ENCODE measurements at regions of chr7 and their contacts with region 1.

Region 1: DNA sequence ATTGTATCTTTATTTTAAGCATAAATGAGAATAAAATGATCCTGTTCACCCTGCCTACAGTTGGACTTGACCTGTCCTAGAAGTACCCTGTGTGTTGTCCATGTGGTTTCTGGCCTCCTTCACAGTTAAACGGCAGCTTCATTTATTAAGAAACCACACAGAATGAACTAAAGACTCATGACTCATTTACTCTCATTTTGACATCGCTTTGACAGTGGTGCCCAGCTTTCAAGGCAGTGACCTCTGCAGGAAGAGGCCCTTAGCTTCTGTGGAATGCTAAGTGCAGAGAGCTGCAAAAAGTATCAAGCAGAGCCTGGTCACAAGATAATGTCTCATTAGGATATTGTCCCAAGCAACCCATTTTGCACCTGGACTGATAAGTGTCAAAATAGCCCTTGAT is 93.4 kb downstream of the AVL9 start:
- DNase-seq: no peak
- ATAC-seq: peak in 3 of 4 donors; percentile 45 to 52 (median 50)
- H3K4me3 ChIP-seq: no peak overlapping the region
- H3K27ac ChIP-seq: peak overlapping the region in 11 of 12 donors; percentile 65 to 87 (median 79)
- H3K4me1 ChIP-seq: peaks cover 12 to 43% (median 34%) of the 10 kb centered on the region in 12 donors
- H3K27me3 ChIP-seq: no peaks in the 10 kb centered on the region
- CTCF ChIP-seq: no peak
- POLR2A ChIP-seq: no peak

Region 2: GRCh38 chr7:32490127-32490822 is 98.4 kb before region 1 on chr7 and contains the start of gene LSM5:
- intact Hi-C with region 1: loop called in 5 of 10 experiments (anchors 2 to 10 kb)
- DNase-seq: peak; percentile 91 to 96 (median 93)
- ATAC-seq: peak; percentile 91 to 92 (median 91)
- H3K4me3 ChIP-seq: peak within 1 kb of the TSS; percentile 29 to 82 (median 68)
- H3K27ac ChIP-seq: peak within 1 kb of the TSS; percentile 71 to 93 (median 84)
- H3K4me1 ChIP-seq: peaks cover 0 to 23% (median 13%) of the 10 kb centered on the region in 12 donors
- H3K27me3 ChIP-seq: no peaks in the 10 kb centered on the region
- CTCF ChIP-seq: no peak
- POLR2A ChIP-seq: peak in 1 of 2 donors; percentile 38
- total RNA-seq, gene LSM5: 10.8 to 43.0 (median 35.6) TPM

Region 3: GRCh38 chr7:32495298-32496176 is 93.1 kb before region 1 on chr7 and contains the start of gene AVL9:
- intact Hi-C with region 1: loop called in 6 of 10 experiments (anchors 2 to 10 kb)
- DNase-seq: peak; percentile 98 to 100 (median 99)
- ATAC-seq: peak; percentile 98 to 100 (median 99)
- H3K4me3 ChIP-seq: peak within 1 kb of the TSS; percentile 71 to 96 (median 92)
- H3K27ac ChIP-seq: peak within 1 kb of the TSS; percentile 85 to 99 (median 96)
- H3K4me1 ChIP-seq: peaks cover 0 to 31% (median 14%) of the 10 kb centered on the region in 12 donors
- H3K27me3 ChIP-seq: no peaks in the 10 kb centered on the region
- CTCF ChIP-seq: no peak
- POLR2A ChIP-seq: peak in 1 of 2 donors; percentile 84
- total RNA-seq, gene AVL9: 7.1 to 22.3 (median 16.7) TPM

Region 4: DNA sequence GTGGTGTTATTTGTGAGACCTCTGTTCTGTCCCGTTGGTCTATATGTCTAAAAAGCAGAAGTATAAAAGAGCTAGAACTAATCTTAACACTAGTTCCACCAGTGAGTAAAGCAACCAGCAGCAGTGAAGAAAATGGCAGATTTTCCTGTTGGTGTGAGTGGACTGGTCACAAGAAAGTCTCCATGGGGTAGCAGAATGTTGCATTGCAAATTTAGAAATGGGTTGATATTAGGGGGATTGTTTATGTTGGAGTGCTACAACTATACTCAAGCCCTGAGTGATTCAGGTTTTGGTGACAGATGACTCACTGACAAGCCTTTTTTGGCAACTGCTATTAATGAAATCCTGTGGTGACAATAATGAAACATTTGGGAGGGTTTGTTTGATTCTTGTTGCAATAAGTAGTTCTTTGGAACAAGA is 87.7 kb before region 1 on chr7:
- intact Hi-C with region 1: loop called in 3 of 10 experiments (anchors 5 to 10 kb)
- DNase-seq: no peak
- ATAC-seq: peak in 2 of 4 donors; percentile 45 to 62
- H3K4me3 ChIP-seq: no peak overlapping the region
- H3K27ac ChIP-seq: peak overlapping the region in 5 of 12 donors; percentile 19 to 50 (median 43)
- H3K4me1 ChIP-seq: peaks cover 9 to 56% (median 30%) of the 10 kb centered on the region in 12 donors
- H3K27me3 ChIP-seq: no peaks in the 10 kb centered on the region
- CTCF ChIP-seq: no peak
- POLR2A ChIP-seq: no peak

Region 5: DNA sequence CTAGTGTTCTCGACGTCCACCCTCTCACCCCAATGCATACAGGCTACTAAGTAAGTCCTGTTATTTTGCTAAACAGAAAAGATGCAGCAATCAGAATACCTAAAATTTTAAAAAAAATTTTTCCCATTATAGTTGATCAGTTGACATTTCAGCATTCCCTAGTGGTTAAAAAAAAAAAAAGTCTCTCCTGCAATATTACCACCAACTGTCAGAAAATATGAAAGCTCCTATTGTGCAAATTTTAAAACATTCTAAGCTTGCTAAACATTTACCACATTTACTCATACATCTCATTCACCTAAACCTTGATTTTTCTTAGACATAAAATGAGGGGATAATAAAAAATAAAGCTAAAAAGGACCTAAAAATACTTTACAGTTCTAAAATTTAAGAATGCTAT is 72.3 kb after region 1 on chr7:
- intact Hi-C with region 1: no loop called
- DNase-seq: no peak
- ATAC-seq: no peak
- H3K4me3 ChIP-seq: no peak overlapping the region
- H3K27ac ChIP-seq: no peak overlapping the region
- H3K4me1 ChIP-seq: peaks cover 0 to 5% (median 0%) of the 10 kb centered on the region in 12 donors
- H3K27me3 ChIP-seq: no peaks in the 10 kb centered on the region
- CTCF ChIP-seq: no peak
- POLR2A ChIP-seq: no peak

Measured in heart left ventricle (tissue), 16 donors.